PC-3 (cell line): ENCODE measurements at regions of chr18 and their contacts with region 1.

Region 1: DNA sequence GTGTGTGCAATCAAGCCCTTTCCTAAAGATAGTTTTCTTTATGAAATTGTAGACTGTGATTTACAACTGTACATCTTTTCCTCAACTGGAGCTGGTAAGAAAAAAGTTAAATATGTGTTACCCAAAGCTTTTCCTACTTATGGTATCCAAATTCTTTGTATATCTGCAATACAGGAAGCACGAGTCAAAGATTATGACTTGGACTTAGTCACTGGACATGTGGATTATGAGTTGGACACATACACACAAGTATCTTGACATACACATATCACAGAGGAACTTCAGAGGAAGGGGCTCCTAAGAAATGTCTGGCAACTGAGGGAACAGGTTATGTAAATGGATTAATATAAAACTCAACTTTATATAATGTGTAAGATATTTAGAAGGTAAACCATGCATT is 35.2 kb downstream of the PRELID3A start:
- DNase-seq: peak; percentile 42
- ATAC-seq: peak; percentile 31
- H3K4me3 ChIP-seq: no peak overlapping the region
- H3K27ac ChIP-seq: no peak overlapping the region
- H3K4me1 ChIP-seq: no peaks in the 10 kb centered on the region
- H3K27me3 ChIP-seq: no peaks in the 10 kb centered on the region
- CTCF ChIP-seq: no peak

Region 2: DNA sequence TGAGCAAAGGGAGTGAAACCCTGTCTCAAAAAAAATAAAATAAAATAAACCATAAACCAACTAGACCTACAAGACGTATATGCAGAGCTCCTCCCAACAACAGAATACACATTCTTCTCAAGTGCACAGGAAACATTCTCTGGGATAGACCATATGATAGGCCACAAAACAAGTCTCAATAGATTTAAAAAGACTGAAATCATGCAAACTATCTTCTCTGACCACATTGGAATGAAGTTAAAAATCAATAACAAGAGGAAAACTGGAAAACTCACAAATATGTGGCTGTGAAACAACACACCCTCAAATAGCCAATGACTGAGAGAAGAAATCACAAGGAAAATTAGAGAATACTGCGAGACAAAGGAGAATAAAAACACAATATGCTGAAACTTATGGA is 58.7 kb before region 1 on chr18:
- CTCF ChIA-PET with region 1: no interaction called
- POLR2A ChIA-PET with region 1: no interaction called
- intact Hi-C with region 1: no loop called
- DNase-seq: no peak
- ATAC-seq: no peak
- H3K4me3 ChIP-seq: no peak overlapping the region
- H3K27ac ChIP-seq: no peak overlapping the region
- H3K4me1 ChIP-seq: no peaks in the 10 kb centered on the region
- H3K27me3 ChIP-seq: no peaks in the 10 kb centered on the region
- CTCF ChIP-seq: no peak

Region 3: DNA sequence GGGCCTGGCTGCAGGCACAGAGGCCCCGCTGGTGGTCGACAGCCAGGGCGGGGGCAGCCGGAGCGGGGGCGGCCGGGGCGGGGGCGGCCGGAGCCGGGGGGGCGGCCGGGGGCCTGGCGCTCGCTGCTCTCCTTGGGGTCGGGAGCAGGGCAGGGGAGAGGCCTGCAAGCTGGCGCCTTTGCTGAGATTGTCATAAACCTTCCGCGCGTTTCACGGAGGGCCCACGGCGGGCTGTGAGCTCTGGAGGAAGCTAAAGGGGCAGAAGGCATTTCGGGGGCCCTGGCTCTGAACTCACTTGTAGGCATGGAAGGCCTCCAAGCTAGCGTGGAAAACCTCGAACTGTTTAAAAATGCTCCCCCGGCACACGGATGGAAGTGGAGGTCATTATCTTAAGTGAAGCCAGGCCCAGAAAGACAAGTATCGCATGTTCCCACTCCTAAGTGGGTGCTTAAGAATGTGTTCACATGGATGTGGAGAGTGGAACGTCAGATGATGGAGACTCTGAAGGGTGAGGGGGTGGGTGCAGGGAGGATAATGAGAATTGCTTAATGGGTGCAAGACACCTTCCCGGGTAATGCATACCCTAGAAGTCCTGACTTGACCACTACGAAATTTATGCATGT is 34.6 kb before region 1 on chr18:
- CTCF ChIA-PET with region 1: no interaction called
- POLR2A ChIA-PET with region 1: no interaction called
- intact Hi-C with region 1: no loop called
- DNase-seq: peak; percentile 23
- ATAC-seq: peak; percentile 7
- H3K4me3 ChIP-seq: peak overlapping the region; percentile 87
- H3K27ac ChIP-seq: 0 out of 2 replicates have a peak overlapping the region, but pooled peaks have one; percentile 44
- H3K4me1 ChIP-seq: peaks cover 18% of the 10 kb centered on the region
- H3K27me3 ChIP-seq: 0 out of 2 replicates have a peak, but pooled peaks cover 4% of the 10 kb centered on the region
- CTCF ChIP-seq: no peak

Region 4: GRCh38 chr18:12420831-12421421 is 22.0 kb before region 1 on chr18:
- CTCF ChIA-PET with region 1: no interaction called
- POLR2A ChIA-PET with region 1: interaction called, 15 read pairs
- intact Hi-C with region 1: no loop called
- DNase-seq: no peak
- ATAC-seq: no peak
- H3K4me3 ChIP-seq: no peak overlapping the region
- H3K27ac ChIP-seq: no peak overlapping the region
- H3K4me1 ChIP-seq: no peaks in the 10 kb centered on the region
- H3K27me3 ChIP-seq: no peaks in the 10 kb centered on the region
- CTCF ChIP-seq: no peak

Region 5: DNA sequence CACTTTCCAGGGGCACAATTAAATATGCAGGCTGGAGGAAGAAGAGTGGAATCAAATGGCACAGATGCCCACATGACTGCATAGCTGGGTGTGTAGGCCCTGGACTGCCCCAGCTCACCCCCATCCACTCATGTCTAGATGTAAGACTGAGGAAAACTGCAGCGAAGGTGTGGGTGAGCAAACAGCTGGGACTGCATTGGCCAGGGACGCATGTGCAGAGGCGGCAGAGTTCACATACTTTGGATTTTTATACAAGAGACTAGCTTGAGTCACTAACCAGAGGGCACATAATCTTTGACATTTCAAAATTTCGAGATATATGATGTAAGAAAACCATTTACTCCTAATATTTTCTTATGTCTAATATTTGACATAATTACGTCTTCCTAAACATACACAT is 154.8 kb after region 1 on chr18:
- CTCF ChIA-PET with region 1: no interaction called
- POLR2A ChIA-PET with region 1: no interaction called
- intact Hi-C with region 1: no loop called
- DNase-seq: peak; percentile 86
- ATAC-seq: peak; percentile 73
- H3K4me3 ChIP-seq: no peak overlapping the region
- H3K27ac ChIP-seq: peak overlapping the region; percentile 56
- H3K4me1 ChIP-seq: peaks cover 48% of the 10 kb centered on the region
- H3K27me3 ChIP-seq: no peaks in the 10 kb centered on the region
- CTCF ChIP-seq: no peak

Region 6: DNA sequence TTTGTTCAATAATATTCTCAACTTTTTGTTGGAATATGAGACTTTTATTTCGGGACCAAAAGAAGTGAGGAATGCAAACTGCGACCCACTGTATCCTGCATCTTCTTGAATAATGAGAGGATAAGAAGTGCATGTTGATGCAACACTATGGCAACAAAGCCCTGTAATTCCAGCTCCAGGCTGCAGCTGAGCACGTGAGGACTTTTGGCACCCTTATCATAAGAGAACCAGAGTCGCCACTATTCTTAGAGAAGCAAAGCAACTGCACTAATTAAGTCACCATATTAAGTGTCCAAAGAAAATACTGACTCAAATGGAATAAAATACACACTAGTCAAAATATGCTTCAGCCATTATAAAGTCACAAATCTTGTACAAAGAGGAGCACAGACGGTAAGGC is 1217.6 kb after region 1 on chr18:
- CTCF ChIA-PET with region 1: no interaction called
- POLR2A ChIA-PET with region 1: no interaction called
- intact Hi-C with region 1: no loop called
- DNase-seq: no peak
- ATAC-seq: no peak
- H3K4me3 ChIP-seq: no peak overlapping the region
- H3K27ac ChIP-seq: no peak overlapping the region
- H3K4me1 ChIP-seq: no peaks in the 10 kb centered on the region
- H3K27me3 ChIP-seq: no peaks in the 10 kb centered on the region
- CTCF ChIP-seq: no peak